ENCODE measurements at regions of chr10 and their contacts with region 1.

Region 1: DNA sequence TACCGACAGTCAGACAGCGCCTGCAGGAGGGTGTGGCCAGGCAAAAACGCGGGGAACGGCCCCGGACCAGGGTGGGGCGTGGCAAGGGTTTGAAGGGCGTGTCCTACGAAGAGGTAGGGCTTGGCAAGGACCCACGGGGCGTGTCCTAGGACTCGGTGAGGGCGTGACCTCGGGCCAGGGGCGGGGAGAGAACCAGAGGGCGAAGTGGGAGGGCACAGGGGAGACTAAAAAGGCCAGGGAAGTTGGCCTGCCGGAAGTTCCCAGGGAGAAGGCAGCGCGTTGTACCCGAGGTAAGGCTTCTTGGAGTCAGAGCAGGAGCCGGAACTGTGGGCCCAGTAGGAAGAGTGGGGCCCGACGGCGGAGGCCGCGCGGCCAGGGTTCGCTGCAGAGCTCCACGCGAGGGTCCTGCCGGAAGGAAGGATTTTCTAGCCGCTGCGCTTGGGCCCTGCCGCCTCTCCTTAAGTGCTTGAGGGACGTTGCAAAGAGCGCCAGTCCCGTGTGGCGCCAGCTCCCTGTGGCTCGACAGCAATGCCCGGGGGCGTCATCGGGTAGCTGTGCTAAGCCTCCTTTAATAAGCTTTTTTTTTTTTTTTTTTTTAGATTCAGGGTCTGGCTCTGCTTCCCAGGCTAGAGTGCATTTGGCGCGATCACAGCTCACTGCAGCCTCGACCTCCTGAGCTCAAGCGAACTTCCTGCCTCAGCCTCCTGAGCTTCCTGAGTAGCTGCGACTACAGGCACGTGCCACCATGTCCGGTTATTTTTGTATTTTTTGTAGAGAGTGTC is at the start of gene PTER:
- DNase-seq: peak; percentile 80 to 99
- H3K4me3 ChIP-seq: peak within 1 kb of the TSS; percentile 78
- H3K27ac ChIP-seq: peak within 1 kb of the TSS; percentile 99
- H3K4me1 ChIP-seq: peaks cover 43% of the 10 kb centered on the region
- H3K27me3 ChIP-seq: no peaks in the 10 kb centered on the region
- CTCF ChIP-seq: no peak
- total RNA-seq, gene PTER: 20.6 and 36.1 TPM in 2 replicates

Region 2: GRCh38 chr10:16141499-16141898 is 295.4 kb before region 1 on chr10:
- CTCF ChIA-PET with region 1: no interaction called
- POLR2A ChIA-PET with region 1: no interaction called
- intact Hi-C with region 1: no loop called
- DNase-seq: no peak
- H3K4me3 ChIP-seq: no peak overlapping the region
- H3K27ac ChIP-seq: no peak overlapping the region
- H3K4me1 ChIP-seq: no peaks in the 10 kb centered on the region
- H3K27me3 ChIP-seq: peaks cover 9% of the 10 kb centered on the region
- CTCF ChIP-seq: no peak

Region 3: DNA sequence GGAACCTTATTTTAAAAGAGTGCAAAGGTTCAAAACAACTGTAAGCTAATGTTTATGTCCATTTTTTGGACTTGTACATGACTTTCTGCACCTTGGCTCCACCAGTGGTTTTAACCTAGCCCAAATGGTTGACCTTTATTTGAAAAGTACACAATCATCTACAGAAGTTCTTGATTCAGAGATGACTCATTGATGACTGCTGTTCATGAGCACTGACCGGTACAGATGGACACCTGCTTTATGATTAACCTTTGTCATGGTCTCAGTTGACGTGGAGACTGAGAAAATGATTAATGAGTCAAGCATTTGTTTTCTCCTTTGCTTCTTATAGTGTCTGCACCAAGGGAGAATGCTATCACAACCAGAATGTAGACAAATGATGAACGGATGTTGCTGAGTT is 55.9 kb before region 1 on chr10:
- CTCF ChIA-PET with region 1: interaction called, 6 read pairs
- POLR2A ChIA-PET with region 1: interaction called, 5 read pairs
- intact Hi-C with region 1: loop called (anchors 1 kb)
- DNase-seq: peak; percentile 30 to 94
- H3K4me3 ChIP-seq: no peak overlapping the region
- H3K27ac ChIP-seq: peak overlapping the region; percentile 68
- H3K4me1 ChIP-seq: peaks cover 14% of the 10 kb centered on the region
- H3K27me3 ChIP-seq: no peaks in the 10 kb centered on the region
- CTCF ChIP-seq: no peak

Region 4: DNA sequence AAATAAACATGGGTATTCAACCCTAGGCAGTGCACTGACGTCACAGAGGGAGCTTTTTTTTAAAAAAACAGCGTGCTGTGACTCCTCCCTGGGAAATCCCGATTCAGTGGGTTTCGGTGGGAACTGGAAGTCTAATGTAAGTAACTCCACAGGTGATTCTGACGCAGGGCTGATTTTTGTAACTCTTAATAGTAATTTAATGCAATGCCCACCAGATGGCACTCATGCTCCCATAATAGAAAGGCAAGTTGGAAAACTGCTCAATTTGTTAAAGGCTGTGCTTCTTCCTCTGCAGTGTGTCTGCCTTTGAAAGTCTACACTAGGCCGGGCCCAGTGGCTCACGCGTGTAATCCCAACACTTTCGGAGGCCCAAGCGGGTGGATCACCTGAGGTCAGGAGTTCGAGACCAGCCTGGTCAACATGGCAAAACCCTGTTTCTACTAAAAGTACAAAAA is 391.2 kb after region 1 on chr10:
- CTCF ChIA-PET with region 1: no interaction called
- POLR2A ChIA-PET with region 1: no interaction called
- intact Hi-C with region 1: no loop called
- DNase-seq: peak; percentile 50 to 52
- H3K4me3 ChIP-seq: no peak overlapping the region
- H3K27ac ChIP-seq: no peak overlapping the region
- H3K4me1 ChIP-seq: no peaks in the 10 kb centered on the region
- H3K27me3 ChIP-seq: no peaks in the 10 kb centered on the region
- CTCF ChIP-seq: peak; percentile 64

Region 5: GRCh38 chr10:17474595-17475323 is 1037.8 kb after region 1 on chr10:
- CTCF ChIA-PET with region 1: interaction called, 11 read pairs
- POLR2A ChIA-PET with region 1: no interaction called
- intact Hi-C with region 1: no loop called
- DNase-seq: no peak
- H3K4me3 ChIP-seq: no peak overlapping the region
- H3K27ac ChIP-seq: no peak overlapping the region
- H3K4me1 ChIP-seq: no peaks in the 10 kb centered on the region
- H3K27me3 ChIP-seq: no peaks in the 10 kb centered on the region
- CTCF ChIP-seq: no peak

Measured in PC-9 (cell line).